CD4-positive, alpha-beta memory T cell (primary cell): ENCODE measurements at regions of chr6 and their contacts with region 1.

Region 1: DNA sequence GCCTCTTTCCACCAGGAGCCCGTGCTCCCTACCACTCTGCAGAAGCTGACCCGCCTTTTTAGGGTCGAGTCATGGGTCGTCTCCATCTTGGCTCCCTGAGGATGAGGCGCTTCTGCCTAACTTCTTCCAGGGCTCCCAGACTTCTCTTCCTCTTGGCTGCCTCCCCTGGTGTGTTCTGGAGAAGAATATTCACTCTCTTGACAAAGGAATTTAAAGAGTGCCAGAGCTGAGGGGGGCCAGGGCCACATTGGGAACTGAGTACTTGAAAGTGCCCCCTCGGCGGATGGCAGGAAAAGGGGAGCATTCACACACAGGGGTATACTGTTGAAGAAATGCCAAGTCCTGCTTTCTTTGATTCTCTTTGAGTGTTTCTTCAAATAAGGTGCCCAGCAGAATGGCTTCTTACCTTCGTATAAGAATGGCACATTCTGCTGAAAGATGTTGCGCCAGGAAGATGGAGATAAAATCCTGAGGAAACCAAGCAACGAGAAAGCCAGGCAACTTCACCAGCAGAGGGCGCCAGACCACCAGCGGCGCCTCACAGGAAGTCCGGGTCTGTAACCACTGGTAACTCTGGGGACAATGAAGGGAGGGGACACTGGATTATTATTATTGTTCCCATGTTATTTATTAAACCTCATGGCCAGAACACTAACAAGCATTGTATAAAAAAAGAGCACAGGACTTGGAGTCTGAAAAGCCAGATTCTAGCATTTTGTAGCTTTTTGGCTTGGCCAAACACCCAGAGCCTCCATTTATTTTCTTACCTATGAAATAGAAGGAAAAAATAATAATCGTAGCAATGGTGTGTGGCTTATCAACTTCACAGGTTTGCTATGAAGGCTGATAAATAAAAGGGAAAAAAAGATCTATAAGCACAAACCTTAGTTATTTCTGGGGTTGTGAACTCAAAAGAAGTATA is 176.7 kb downstream of the HACE1 start:
- DNase-seq: peak in 4 of 5 donors; percentile 61 to 70 (median 62)
- H3K4me3 ChIP-seq: no peak overlapping the region
- H3K4me3 Mint-ChIP-seq: peak overlapping the region in 6 of 8 donors; percentile 15 to 61 (median 40)
- H3K27ac ChIP-seq: no peak overlapping the region
- H3K27ac Mint-ChIP-seq: peak overlapping the region in 3 of 7 donors; percentile 20 to 60 (median 37)
- H3K4me1 ChIP-seq: peaks cover 18% of the 10 kb centered on the region
- H3K4me1 Mint-ChIP-seq: peaks cover 12 to 21% (median 18%) of the 10 kb centered on the region in 4 donors
- H3K27me3 ChIP-seq: no peaks in the 10 kb centered on the region
- H3K27me3 Mint-ChIP-seq: no peaks in the 10 kb centered on the region

Region 2: DNA sequence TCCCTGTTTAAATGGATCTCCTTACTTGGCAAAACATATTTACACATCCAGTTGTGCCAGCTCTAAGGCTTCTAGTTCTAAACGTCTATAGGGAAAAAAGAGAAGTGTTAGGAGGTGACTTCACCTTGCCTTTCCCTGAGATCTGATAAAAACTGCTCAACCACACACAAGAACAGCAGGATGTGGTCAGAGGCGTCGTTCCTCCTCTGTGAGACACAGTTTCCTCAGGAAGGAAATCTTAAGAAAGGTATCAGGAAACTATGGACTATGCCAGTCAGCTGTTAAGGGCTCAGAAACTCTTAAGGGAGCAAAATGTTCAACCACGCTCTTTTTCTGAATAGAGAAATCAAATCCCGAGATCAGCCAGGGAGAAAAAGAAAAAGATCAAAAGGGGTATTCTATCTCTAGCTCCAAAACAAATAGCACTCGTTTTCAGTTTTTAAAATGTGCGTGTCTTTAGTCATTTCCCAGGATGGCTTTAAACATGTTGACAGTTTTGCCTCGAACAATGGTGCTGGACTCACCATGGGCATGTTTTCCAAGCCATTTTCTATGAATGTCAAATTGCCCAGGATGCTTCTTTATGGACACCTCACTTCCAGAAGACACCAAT is 22.2 kb after region 1 on chr6:
- CTCF ChIA-PET with region 1: interaction called, 6 read pairs
- POLR2A ChIA-PET with region 1: no interaction called
- intact Hi-C with region 1: loop called (anchors 1 kb)
- DNase-seq: peak; percentile 49 to 63 (median 62)
- H3K4me3 ChIP-seq: peak overlapping the region in 1 of 2 donors; percentile 26
- H3K4me3 Mint-ChIP-seq: peak overlapping the region; percentile 21 to 86 (median 80)
- H3K27ac ChIP-seq: no peak overlapping the region
- H3K27ac Mint-ChIP-seq: peak overlapping the region; percentile 3 to 76 (median 53)
- H3K4me1 ChIP-seq: peaks cover 35% of the 10 kb centered on the region
- H3K4me1 Mint-ChIP-seq: peaks cover 29 to 51% (median 41%) of the 10 kb centered on the region in 4 donors
- H3K27me3 ChIP-seq: no peaks in the 10 kb centered on the region
- H3K27me3 Mint-ChIP-seq: no peaks in the 10 kb centered on the region

Region 3: GRCh38 chr6:104771258-104771832 is 88.4 kb after region 1 on chr6:
- CTCF ChIA-PET with region 1: interaction called, 106 read pairs
- POLR2A ChIA-PET with region 1: no interaction called
- intact Hi-C with region 1: loop called (anchors 1 kb)
- DNase-seq: peak in 4 of 5 donors; percentile 38 to 52 (median 41)
- H3K4me3 ChIP-seq: no peak overlapping the region
- H3K4me3 Mint-ChIP-seq: no peak overlapping the region
- H3K27ac ChIP-seq: no peak overlapping the region
- H3K27ac Mint-ChIP-seq: peak overlapping the region in 1 of 7 donors; percentile 65
- H3K4me1 ChIP-seq: no peaks in the 10 kb centered on the region
- H3K4me1 Mint-ChIP-seq: peaks cover 8 to 14% (median 10%) of the 10 kb centered on the region in 4 donors
- H3K27me3 ChIP-seq: no peaks in the 10 kb centered on the region
- H3K27me3 Mint-ChIP-seq: no peaks in the 10 kb centered on the region

Region 4: DNA sequence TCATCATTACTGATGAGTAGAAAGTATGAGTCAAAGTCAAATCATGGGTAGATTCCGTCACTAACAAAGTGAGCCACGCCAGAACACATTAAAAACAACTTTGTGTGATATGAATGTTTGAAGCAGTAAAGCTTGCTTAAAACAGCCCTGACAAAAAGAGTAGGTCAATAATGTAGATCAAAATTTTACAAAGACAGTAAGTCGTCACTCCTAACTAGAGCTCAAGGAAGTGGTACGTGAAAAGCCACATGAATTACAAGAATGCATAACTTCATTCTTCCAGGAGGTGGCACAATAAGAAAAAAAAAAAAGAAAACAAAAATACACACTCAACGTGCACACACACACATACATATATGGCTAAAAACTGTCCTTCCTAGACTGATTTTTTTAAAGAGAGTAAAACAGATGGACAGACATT is 106.8 kb after region 1 on chr6:
- CTCF ChIA-PET with region 1: interaction called, 13 read pairs
- POLR2A ChIA-PET with region 1: no interaction called
- intact Hi-C with region 1: no loop called
- DNase-seq: peak; percentile 45 to 72 (median 48)
- H3K4me3 ChIP-seq: no peak overlapping the region
- H3K4me3 Mint-ChIP-seq: peak overlapping the region in 7 of 8 donors; percentile 28 to 75 (median 58)
- H3K27ac ChIP-seq: no peak overlapping the region
- H3K27ac Mint-ChIP-seq: peak overlapping the region in 6 of 7 donors; percentile 1 to 89 (median 66)
- H3K4me1 ChIP-seq: peaks cover 25% of the 10 kb centered on the region
- H3K4me1 Mint-ChIP-seq: peaks cover 15 to 23% (median 20%) of the 10 kb centered on the region in 4 donors
- H3K27me3 ChIP-seq: no peaks in the 10 kb centered on the region
- H3K27me3 Mint-ChIP-seq: no peaks in the 10 kb centered on the region

Region 5: GRCh38 chr6:105077596-105078385 is 394.8 kb after region 1 on chr6:
- CTCF ChIA-PET with region 1: no interaction called
- POLR2A ChIA-PET with region 1: no interaction called
- intact Hi-C with region 1: loop called (anchors 1 kb)
- DNase-seq: peak in 2 of 5 donors; percentile 8 to 10
- H3K4me3 ChIP-seq: no peak overlapping the region
- H3K4me3 Mint-ChIP-seq: no peak overlapping the region
- H3K27ac ChIP-seq: no peak overlapping the region
- H3K27ac Mint-ChIP-seq: no peak overlapping the region
- H3K4me1 ChIP-seq: no peaks in the 10 kb centered on the region
- H3K4me1 Mint-ChIP-seq: no peaks in the 10 kb centered on the region
- H3K27me3 ChIP-seq: peaks cover 3% of the 10 kb centered on the region
- H3K27me3 Mint-ChIP-seq: peaks cover 0 to 8% of the 10 kb centered on the region in 2 donors

Region 6: DNA sequence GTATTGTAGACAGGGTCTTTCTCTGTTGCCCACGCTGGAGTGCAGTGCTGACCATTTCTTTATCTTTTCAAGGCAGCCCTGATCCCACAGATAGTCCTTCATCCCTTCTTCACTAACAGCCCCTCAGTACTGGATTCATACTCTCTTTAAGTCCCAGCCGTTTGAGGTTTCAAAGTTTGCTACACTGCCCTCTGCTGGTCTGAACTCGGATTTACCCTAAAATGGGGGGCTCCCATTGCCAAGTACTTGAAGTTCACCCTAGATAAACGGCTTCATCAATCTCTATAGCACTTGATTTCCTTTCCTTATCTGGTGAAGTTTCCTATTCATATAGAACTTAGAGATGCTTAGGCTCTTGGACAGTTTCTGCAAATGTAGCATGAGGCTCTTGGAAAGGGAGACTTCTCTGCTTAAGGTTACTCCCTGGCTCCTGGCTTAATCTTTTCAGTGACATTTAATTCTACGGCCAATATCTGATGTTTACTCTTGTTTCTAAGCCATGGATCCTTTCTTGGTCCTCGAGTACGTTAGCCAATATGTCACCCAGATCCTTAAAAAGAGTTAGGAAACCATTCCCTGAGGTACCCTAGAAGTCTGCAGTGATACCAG is 741.3 kb after region 1 on chr6:
- CTCF ChIA-PET with region 1: no interaction called
- POLR2A ChIA-PET with region 1: no interaction called
- intact Hi-C with region 1: loop called (anchors 2 kb)
- DNase-seq: peak; percentile 40 to 55 (median 49)
- H3K4me3 ChIP-seq: no peak overlapping the region
- H3K4me3 Mint-ChIP-seq: no peak overlapping the region
- H3K27ac ChIP-seq: no peak overlapping the region
- H3K27ac Mint-ChIP-seq: peak overlapping the region in 1 of 7 donors; percentile 14
- H3K4me1 ChIP-seq: no peaks in the 10 kb centered on the region
- H3K4me1 Mint-ChIP-seq: peaks cover 0 to 4% (median 2%) of the 10 kb centered on the region in 4 donors
- H3K27me3 ChIP-seq: no peaks in the 10 kb centered on the region
- H3K27me3 Mint-ChIP-seq: no peaks in the 10 kb centered on the region